CD8-positive, alpha-beta T cell (primary cell): ENCODE measurements at regions of chr10 and their contacts with region 1.

Region 1: DNA sequence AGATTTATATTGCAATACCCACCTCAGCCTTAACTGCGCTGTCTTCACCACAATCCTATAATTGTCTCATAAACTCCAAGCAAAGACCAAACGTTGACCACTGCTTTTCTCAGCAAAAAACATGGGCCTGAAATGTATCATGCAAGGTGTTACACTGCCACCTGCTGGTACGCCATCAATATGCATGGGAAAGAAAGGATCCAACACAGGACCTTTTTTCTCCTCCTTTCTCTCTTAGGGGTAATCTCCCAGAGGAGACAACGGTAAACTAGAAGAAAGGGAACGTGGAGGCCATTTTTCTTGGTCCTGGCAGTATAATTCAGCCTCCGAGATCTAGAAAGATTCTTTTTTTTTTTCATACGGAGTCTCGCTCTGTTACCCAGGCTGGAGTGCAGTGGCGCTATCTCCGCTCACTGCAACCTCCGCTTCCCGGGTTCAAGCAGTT is 79.1 kb upstream of the MPP7 start:
- DNase-seq: peak; percentile 67 to 91 (median 88)
- ATAC-seq: peak; percentile 97
- H3K4me3 ChIP-seq: no peak overlapping the region
- H3K4me3 Mint-ChIP-seq: no peak overlapping the region
- H3K27ac ChIP-seq: no peak overlapping the region
- H3K27ac Mint-ChIP-seq: peak overlapping the region; percentile 58
- H3K4me1 ChIP-seq: peaks cover 25% of the 10 kb centered on the region
- H3K4me1 Mint-ChIP-seq: peaks cover 27% of the 10 kb centered on the region
- H3K27me3 ChIP-seq: no peaks in the 10 kb centered on the region
- H3K27me3 Mint-ChIP-seq: peaks cover 2% of the 10 kb centered on the region
- CTCF ChIP-seq: peak; percentile 96

Region 2: DNA sequence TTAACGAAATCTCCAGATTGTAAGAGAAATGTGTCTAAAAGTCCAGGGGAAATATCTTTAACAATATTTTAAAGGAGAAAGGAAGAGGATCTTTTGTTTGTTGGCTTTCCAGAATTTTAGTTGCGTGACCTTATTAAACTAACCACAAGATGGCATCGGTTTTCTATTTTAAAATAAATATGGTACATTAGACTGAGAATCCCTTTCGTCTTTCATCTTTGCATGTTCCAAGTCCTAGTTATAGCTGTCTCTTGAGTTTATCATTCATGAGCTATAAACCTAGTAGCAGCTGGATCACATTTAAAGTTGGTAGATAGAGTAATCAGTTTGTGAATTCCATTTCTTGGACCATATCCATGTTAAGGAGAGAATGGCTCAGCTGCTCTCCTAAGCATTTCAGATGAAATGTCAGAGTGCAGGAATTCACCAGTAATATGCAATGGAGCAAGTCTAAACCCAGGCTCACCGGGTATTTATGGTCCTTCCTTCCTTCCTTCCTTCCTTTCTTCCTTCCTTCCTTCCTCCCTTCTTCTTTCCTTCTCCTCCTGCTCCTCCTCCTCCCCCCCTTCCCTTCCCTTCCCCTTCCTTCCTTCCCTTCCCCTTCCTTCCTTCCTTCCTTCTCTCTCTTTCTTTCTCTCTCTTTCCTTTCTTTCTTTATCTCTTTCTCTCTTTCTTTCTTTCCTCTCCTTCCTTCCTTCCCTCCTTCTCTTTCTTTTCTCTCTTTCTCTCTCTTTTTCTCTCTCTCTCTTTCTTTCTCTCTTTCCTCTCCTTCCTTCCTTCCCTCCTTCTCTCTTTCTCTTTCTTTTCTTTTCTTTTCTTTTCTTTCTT is 935.6 kb before region 1 on chr10:
- CTCF ChIA-PET with region 1: no interaction called
- POLR2A ChIA-PET with region 1: no interaction called
- intact Hi-C with region 1: loop called in 1 of 2 experiments (anchors 10 kb)
- DNase-seq: peak in 2 of 9 experiments; percentile 38 to 60
- ATAC-seq: peak; percentile 46
- H3K4me3 ChIP-seq: no peak overlapping the region
- H3K4me3 Mint-ChIP-seq: no peak overlapping the region
- H3K27ac ChIP-seq: no peak overlapping the region
- H3K27ac Mint-ChIP-seq: no peak overlapping the region
- H3K4me1 ChIP-seq: peaks cover 9% of the 10 kb centered on the region
- H3K4me1 Mint-ChIP-seq: peaks cover 21% of the 10 kb centered on the region
- H3K27me3 ChIP-seq: no peaks in the 10 kb centered on the region
- H3K27me3 Mint-ChIP-seq: no peaks in the 10 kb centered on the region
- CTCF ChIP-seq: peak; percentile 61

Region 3: DNA sequence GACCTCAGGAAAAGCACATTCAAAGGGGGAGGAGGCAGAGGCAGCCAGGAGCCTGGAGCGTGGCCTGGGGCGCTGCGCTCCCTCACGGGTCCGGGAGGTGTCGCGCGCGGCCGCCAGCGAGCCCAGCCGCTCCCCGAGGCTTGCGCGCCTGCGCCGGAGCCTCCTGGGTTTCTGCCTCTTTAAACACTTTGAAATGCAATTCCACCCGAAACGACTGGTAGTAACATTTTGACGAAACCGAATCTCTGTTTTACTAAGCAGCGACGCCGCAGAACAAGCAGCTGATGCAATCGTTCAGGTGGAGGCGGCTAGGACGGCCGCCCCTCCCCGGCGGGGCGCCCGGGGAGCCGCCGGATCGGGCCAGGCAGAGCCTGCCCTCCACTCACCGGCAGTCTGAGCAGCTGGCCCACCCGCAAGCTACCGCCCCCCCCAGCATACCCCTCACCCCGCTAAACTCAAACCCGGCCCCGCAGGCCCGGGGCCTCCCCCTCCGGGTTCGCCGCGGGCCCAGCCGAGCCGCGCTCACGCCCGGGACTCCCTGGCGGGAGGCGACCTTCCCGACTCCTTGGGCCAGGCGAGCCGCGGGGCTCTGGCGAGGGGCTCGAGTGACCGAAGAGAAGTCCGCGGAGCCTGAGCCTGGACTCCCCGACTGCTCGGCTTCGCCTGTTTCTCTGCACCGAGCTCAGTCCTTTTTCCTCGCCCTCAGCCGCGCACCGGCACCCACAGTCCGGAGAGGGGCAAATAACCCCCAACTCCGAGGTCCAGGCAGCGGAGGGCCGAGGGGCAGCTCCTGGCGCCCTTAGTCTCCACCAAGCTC is 639.5 kb before region 1 on chr10:
- CTCF ChIA-PET with region 1: interaction called, 9 read pairs
- POLR2A ChIA-PET with region 1: interaction called, 3 read pairs
- intact Hi-C with region 1: loop called (anchors 2 to 5 kb)
- DNase-seq: peak; percentile 55 to 85 (median 78)
- ATAC-seq: peak; percentile 82
- H3K4me3 ChIP-seq: peak overlapping the region; percentile 42 to 80
- H3K4me3 Mint-ChIP-seq: peak overlapping the region; percentile 87
- H3K27ac ChIP-seq: no peak overlapping the region
- H3K27ac Mint-ChIP-seq: no peak overlapping the region
- H3K4me1 ChIP-seq: peaks cover 57% of the 10 kb centered on the region
- H3K4me1 Mint-ChIP-seq: peaks cover 43% of the 10 kb centered on the region
- H3K27me3 ChIP-seq: peaks cover 53 to 65% of the 10 kb centered on the region in 2 experiments
- H3K27me3 Mint-ChIP-seq: peaks cover 57% of the 10 kb centered on the region
- CTCF ChIP-seq: peak; percentile 78

Region 4: GRCh38 chr10:28250782-28251181 is 131.1 kb before region 1 on chr10:
- CTCF ChIA-PET with region 1: interaction called, 83 read pairs
- POLR2A ChIA-PET with region 1: no interaction called
- intact Hi-C with region 1: loop called (anchors 1 kb)
- DNase-seq: peak in 2 of 9 experiments; percentile 33 to 50
- ATAC-seq: peak; percentile 42
- H3K4me3 ChIP-seq: no peak overlapping the region
- H3K4me3 Mint-ChIP-seq: no peak overlapping the region
- H3K27ac ChIP-seq: no peak overlapping the region
- H3K27ac Mint-ChIP-seq: no peak overlapping the region
- H3K4me1 ChIP-seq: no peaks in the 10 kb centered on the region
- H3K4me1 Mint-ChIP-seq: peaks cover 41% of the 10 kb centered on the region
- H3K27me3 ChIP-seq: no peaks in the 10 kb centered on the region
- H3K27me3 Mint-ChIP-seq: no peaks in the 10 kb centered on the region
- CTCF ChIP-seq: peak; percentile 60

Region 5: GRCh38 chr10:28312572-28312971 is 69.4 kb before region 1 on chr10:
- CTCF ChIA-PET with region 1: interaction called, 25 read pairs
- POLR2A ChIA-PET with region 1: no interaction called
- intact Hi-C with region 1: no loop called
- DNase-seq: no peak
- ATAC-seq: no peak
- H3K4me3 ChIP-seq: no peak overlapping the region
- H3K4me3 Mint-ChIP-seq: no peak overlapping the region
- H3K27ac ChIP-seq: no peak overlapping the region
- H3K27ac Mint-ChIP-seq: no peak overlapping the region
- H3K4me1 ChIP-seq: no peaks in the 10 kb centered on the region
- H3K4me1 Mint-ChIP-seq: peaks cover 43% of the 10 kb centered on the region
- H3K27me3 ChIP-seq: no peaks in the 10 kb centered on the region
- H3K27me3 Mint-ChIP-seq: no peaks in the 10 kb centered on the region
- CTCF ChIP-seq: no peak

Region 6: GRCh38 chr10:28334296-28334695 is 47.6 kb before region 1 on chr10:
- CTCF ChIA-PET with region 1: interaction called, 96 read pairs
- POLR2A ChIA-PET with region 1: interaction called, 27 read pairs
- intact Hi-C with region 1: loop called (anchors 1 to 5 kb)
- DNase-seq: peak in 8 of 9 experiments; percentile 14 to 98 (median 50)
- ATAC-seq: peak; percentile 61
- H3K4me3 ChIP-seq: peak overlapping the region; percentile 60 to 67
- H3K4me3 Mint-ChIP-seq: peak overlapping the region; percentile 95
- H3K27ac ChIP-seq: peak overlapping the region; percentile 96 to 98
- H3K27ac Mint-ChIP-seq: peak overlapping the region; percentile 100
- H3K4me1 ChIP-seq: peaks cover 64% of the 10 kb centered on the region
- H3K4me1 Mint-ChIP-seq: peaks cover 74% of the 10 kb centered on the region
- H3K27me3 ChIP-seq: no peaks in the 10 kb centered on the region
- H3K27me3 Mint-ChIP-seq: no peaks in the 10 kb centered on the region
- CTCF ChIP-seq: no peak